CD8-positive, alpha-beta memory T cell (primary cell): ENCODE measurements at regions of chr18 and their contacts with region 1.

Region 1: DNA sequence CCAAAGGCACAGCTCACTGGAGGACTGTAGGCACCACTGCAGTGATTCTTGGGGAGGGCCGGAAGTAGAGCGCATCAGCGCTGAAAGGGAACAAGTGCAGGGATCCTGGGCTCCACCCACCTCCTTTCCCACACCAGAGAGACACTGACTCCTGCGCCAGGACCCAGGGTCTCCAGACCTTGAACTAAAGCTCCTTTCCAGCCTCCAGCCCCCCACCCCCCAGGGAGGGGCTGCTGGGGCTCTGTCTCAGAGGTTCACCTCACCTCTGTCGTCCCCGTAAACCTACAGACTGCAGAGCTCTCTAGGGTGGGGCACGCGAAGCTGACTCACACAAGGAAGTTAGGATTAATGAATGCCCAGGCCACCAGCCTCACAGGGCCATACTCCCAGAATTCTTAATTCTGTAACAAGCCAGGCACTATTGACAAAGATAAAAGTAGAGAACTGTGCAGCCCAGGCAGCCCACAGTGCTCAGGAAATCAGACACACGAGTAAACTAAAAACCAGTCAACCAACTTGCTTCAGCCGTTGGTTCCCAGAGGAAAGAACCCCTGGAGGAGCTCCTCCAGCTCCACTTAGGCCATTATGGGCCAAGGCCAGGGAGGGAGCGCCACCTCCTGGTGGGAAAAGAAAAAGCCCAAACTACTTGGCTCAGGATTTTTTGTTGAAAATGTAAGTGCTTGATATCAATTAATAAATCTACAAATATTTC is 45.1 kb upstream of the ACAA2 start:
- DNase-seq: peak; percentile 34 to 65 (median 46)
- H3K4me3 ChIP-seq: no peak overlapping the region
- H3K4me3 Mint-ChIP-seq: no peak overlapping the region
- H3K27ac ChIP-seq: no peak overlapping the region
- H3K27ac Mint-ChIP-seq: no peak overlapping the region
- H3K4me1 ChIP-seq: no peaks in the 10 kb centered on the region
- H3K4me1 Mint-ChIP-seq: peaks cover 0 to 3% (median 2%) of the 10 kb centered on the region in 3 donors
- H3K27me3 ChIP-seq: no peaks in the 10 kb centered on the region
- H3K27me3 Mint-ChIP-seq: peaks cover 4 to 8% of the 10 kb centered on the region in 2 donors

Region 2: DNA sequence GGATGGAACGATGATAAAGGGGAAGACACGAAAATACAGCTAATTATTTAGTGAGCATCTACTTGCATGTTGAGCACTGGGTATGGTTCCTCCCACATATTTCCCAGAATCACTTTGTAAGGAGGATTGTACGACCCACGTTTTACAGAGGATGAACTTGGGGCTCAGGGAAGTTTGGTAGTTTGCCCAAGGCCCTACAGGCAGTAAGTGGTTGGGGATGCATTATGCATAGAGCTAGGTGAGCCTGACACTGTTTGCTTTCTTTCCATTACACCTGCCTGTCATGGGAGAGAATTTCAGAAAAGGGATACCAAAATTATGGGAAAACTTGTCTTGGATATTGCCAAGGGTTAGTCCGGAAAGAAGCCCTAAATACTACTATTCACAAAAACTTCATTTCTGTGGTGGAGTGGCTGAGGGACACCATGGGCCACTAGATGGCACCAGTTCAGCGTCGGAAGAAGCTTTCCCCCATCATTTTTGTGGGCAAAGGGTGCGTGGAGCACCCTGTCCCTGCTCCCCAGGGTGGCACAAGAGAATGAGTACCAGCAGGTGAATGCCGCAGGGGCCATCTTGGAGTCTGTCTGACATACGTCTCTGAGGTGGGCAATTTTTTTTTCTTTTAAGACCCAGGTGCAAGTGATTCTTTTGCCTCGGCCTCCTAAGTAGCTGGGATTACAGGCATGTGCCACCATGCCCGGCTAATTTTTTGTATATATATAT is 347.9 kb before region 1 on chr18:
- CTCF ChIA-PET with region 1: interaction called, 100 read pairs
- POLR2A ChIA-PET with region 1: no interaction called
- DNase-seq: peak; percentile 37 to 70 (median 40)
- H3K4me3 ChIP-seq: no peak overlapping the region
- H3K4me3 Mint-ChIP-seq: no peak overlapping the region
- H3K27ac ChIP-seq: no peak overlapping the region
- H3K27ac Mint-ChIP-seq: no peak overlapping the region
- H3K4me1 ChIP-seq: no peaks in the 10 kb centered on the region
- H3K4me1 Mint-ChIP-seq: no peaks in the 10 kb centered on the region
- H3K27me3 ChIP-seq: no peaks in the 10 kb centered on the region
- H3K27me3 Mint-ChIP-seq: peaks cover 6 to 18% of the 10 kb centered on the region in 2 donors

Region 3: DNA sequence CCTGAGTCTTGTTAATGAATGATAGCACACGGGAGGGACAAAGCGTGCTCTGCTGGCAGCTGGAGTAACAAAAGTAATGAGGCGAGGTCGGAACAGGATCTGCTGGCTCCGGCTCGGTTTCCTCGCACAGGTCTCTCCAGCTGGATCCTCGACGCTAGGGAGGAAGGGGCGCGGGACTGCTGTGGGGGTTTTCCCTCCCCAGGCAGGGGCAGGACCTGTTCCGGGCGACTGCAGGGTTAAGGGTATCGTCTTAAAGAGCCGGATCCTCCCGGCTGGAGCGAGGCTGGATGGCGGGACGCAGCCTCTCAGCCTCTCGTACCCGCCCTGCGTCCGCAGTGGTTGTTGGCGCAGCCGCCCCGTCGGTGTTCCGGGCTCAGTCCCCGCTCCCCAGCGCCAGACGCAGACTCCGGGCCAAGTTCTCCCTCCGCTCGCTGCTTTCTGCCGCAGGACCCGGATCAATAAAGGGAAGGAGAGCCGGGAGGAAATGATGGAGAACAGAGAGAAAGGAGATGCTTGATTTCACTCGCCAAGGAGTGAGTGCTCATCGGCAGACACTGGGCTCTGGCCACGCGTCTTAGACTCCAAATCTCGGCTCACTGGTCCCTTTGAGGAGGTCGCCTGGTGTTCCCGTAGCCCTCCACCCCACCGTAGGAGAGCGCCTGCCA is 297.7 kb before region 1 on chr18:
- CTCF ChIA-PET with region 1: interaction called, 13 read pairs
- POLR2A ChIA-PET with region 1: no interaction called
- DNase-seq: peak in 1 of 5 donors; percentile 2
- H3K4me3 ChIP-seq: peak overlapping the region; percentile 51
- H3K4me3 Mint-ChIP-seq: peak overlapping the region; percentile 51 to 88 (median 82)
- H3K27ac ChIP-seq: no peak overlapping the region
- H3K27ac Mint-ChIP-seq: peak overlapping the region in 2 of 8 donors; percentile 23 to 53
- H3K4me1 ChIP-seq: peaks cover 22% of the 10 kb centered on the region
- H3K4me1 Mint-ChIP-seq: peaks cover 30 to 34% (median 31%) of the 10 kb centered on the region in 3 donors
- H3K27me3 ChIP-seq: peaks cover 43% of the 10 kb centered on the region
- H3K27me3 Mint-ChIP-seq: peaks cover 57 to 72% of the 10 kb centered on the region in 2 donors